ENCODE measurements at regions of chr20 and their contacts with region 1.

Region 1: DNA sequence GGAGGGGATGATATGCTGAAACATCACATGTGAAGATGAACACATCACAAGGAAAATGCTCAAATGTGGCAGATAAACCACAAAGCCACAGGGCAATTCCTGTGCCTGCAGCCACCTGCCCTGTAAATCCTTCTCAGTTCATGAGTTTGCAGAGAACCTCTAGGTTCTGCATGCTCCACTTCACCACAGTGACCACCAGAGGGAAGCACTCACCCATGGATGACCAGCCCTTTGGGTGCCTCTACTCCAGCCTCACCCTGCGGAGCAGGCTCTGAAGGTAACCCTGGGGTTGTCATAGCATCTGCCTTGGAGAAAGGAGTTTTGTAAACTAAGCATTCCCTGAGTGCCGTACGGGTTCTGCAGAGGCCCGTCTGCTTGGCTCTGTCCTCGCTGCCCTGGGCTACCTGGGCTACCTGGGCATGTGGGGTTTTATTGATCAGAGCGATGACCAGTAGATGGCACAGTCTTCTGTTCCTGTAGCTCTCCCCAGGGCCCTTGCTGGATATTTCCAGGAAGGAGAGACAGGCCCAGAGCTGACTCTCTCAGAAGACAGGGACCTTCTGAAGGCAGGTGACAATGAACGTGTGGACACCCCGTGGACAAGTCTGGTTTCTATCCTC is 31.7 kb upstream of the CST1 start:
- DNase-seq: peak in 1 of 2 experiments; percentile 83
- H3K4me3 ChIP-seq: no peak overlapping the region
- H3K27ac ChIP-seq: no peak overlapping the region
- H3K4me1 ChIP-seq: no peaks in the 10 kb centered on the region
- H3K27me3 ChIP-seq: no peaks in the 10 kb centered on the region
- CTCF ChIP-seq: peak; percentile 75 to 90 (median 76)
- EP300 ChIP-seq: no peak
- POLR2A ChIP-seq: no peak
- RAD21 ChIP-seq: peak; percentile 82 to 84

Region 2: DNA sequence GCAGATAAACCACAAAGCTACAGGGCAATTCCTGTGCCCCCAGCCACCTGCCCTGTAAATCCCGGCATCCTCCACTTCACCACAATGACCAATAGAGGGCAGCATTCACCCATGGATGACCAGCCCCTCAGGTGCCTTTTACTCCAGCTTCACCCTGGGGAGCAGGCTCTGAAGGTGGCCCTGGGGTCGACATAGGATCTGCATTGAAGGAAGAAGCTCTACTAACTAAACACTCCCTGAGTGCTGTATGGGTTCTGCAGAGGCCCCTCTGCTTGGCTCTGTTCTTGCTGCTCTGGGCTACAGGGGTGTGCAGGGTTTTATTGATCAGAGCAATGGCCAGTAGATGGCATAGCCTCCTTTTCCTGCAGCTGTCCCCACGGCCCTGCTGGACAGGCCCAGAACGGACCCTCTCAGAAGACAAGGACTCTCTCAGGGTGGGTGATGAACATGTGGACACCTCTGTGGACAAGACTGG is 114.0 kb before region 1 on chr20:
- CTCF ChIA-PET with region 1: interaction called, 12 read pairs
- POLR2A ChIA-PET with region 1: no interaction called
- DNase-seq: peak; percentile 19 to 88
- H3K4me3 ChIP-seq: no peak overlapping the region
- H3K27ac ChIP-seq: no peak overlapping the region
- H3K4me1 ChIP-seq: no peaks in the 10 kb centered on the region
- H3K27me3 ChIP-seq: no peaks in the 10 kb centered on the region
- CTCF ChIP-seq: peak; percentile 80 to 90 (median 86)
- EP300 ChIP-seq: no peak
- POLR2A ChIP-seq: no peak
- RAD21 ChIP-seq: peak; percentile 89

Region 3: DNA sequence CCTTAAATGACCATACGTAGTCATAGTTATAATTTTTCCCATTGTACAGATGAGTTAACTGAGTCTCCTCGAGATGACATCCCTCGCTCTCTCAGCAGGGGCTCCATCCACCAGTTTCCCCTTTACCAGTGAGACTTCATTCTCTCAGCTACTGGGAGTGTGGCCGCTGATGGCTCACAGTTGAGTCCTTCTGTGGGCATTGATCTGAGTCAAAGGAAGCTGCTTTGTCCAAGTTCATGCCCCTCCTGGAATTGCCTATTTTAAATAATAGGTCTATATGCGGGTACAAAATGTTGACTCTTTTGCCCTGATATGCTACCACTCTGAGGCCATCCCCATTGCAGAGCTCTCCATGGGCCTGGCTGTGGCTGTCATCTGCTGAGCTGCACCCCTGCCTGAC is 16.9 kb before region 1 on chr20:
- CTCF ChIA-PET with region 1: interaction called, 17 read pairs
- POLR2A ChIA-PET with region 1: no interaction called
- DNase-seq: no peak
- H3K4me3 ChIP-seq: no peak overlapping the region
- H3K27ac ChIP-seq: no peak overlapping the region
- H3K4me1 ChIP-seq: peaks cover 0 to 4% (median 3%) of the 10 kb centered on the region in 4 experiments; a peak in 3 of 7 replicates
- H3K27me3 ChIP-seq: peaks cover 0 to 8% (median 1%) of the 10 kb centered on the region in 4 experiments; a peak in 4 of 7 replicates
- CTCF ChIP-seq: no peak
- EP300 ChIP-seq: no peak
- POLR2A ChIP-seq: no peak
- RAD21 ChIP-seq: no peak

Region 4: GRCh38 chr20:23794841-23795240 is 12.4 kb after region 1 on chr20:
- CTCF ChIA-PET with region 1: interaction called, 24 read pairs
- POLR2A ChIA-PET with region 1: no interaction called
- DNase-seq: no peak
- H3K4me3 ChIP-seq: no peak overlapping the region
- H3K27ac ChIP-seq: no peak overlapping the region
- H3K4me1 ChIP-seq: no peaks in the 10 kb centered on the region
- H3K27me3 ChIP-seq: no peaks in the 10 kb centered on the region
- CTCF ChIP-seq: no peak
- EP300 ChIP-seq: no peak
- POLR2A ChIP-seq: no peak
- RAD21 ChIP-seq: no peak

Region 5: DNA sequence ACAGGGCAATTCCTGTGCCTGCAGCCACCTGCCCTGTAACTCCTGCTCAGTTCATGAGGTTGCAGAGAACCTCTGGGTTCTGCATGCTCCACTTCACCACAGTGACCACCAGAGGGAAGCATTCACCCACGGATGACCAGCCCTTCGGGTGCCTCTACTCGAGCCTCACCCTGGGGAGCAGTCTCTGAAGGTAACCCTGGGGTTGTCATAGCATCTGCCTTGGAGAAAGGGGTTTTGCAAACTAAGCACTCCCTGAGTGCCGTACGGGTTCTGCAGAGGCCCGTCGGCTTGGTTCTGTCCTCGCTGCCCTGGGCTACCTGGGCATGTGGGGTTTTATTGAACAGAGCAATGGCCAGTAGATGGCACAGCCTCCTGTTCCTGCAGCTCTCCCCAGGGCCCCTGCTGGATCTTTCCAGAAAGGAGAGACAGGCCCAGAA is 107.3 kb after region 1 on chr20:
- CTCF ChIA-PET with region 1: interaction called, 13 read pairs
- POLR2A ChIA-PET with region 1: no interaction called
- DNase-seq: peak in 1 of 2 experiments; percentile 85
- H3K4me3 ChIP-seq: no peak overlapping the region
- H3K27ac ChIP-seq: no peak overlapping the region
- H3K4me1 ChIP-seq: no peaks in the 10 kb centered on the region
- H3K27me3 ChIP-seq: no peaks in the 10 kb centered on the region
- CTCF ChIP-seq: peak; percentile 84 to 91 (median 87)
- EP300 ChIP-seq: no peak
- POLR2A ChIP-seq: no peak
- RAD21 ChIP-seq: peak; percentile 91 to 94

Region 6: DNA sequence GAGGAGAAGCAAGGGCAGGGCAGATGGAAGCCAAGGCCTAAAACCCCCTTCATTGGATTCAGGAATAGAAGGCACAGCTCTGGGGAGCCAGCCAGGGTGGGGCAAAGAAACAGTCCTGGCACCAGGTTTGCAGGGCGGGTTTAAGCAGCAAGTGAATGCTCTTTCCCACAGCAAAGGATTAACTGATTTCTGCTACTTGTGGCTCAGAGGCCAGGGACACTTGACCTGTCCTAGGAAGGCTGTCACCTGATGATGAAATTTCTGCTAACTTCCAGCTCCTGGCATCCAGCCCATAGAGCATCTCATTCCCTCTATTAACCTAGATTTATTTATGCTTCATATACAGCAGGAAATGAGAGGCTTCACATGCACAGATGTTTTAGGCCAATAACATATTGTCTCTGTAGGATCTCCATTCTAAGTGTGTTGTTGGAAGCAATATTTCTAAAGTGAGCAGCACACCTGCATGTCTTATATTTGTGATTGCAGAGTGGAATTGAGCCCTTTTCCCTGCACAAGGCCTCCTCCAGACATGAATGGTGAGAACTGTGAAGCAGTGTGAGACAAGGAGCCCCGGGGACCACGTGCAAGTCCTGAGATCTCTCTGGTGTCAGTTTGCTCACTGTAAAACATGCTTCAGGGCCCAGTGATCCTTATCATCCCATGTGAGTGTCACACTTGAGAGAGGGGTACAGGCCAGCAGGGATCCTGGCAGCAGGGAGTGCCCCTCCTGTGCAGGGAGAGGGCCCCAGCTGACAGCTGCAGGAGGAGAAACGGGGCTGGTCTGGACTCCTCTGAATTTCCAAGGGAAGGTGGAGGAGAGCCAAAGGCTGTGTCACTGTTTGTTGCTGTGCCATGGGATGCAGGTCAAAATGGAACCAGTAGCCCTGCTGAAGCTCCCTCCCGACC is 138.2 kb after region 1 on chr20:
- CTCF ChIA-PET with region 1: no interaction called
- POLR2A ChIA-PET with region 1: no interaction called
- DNase-seq: no peak
- H3K4me3 ChIP-seq: no peak overlapping the region
- H3K27ac ChIP-seq: no peak overlapping the region
- H3K4me1 ChIP-seq: peaks cover 0 to 4% (median 1%) of the 10 kb centered on the region in 4 experiments; a peak in 2 of 7 replicates
- H3K27me3 ChIP-seq: no peaks in the 10 kb centered on the region
- CTCF ChIP-seq: no peak
- EP300 ChIP-seq: no peak
- POLR2A ChIP-seq: no peak
- RAD21 ChIP-seq: no peak